Head of caudate nucleus (tissue), 42 donors: ENCODE measurements at regions of chr13 and their contacts with region 1.

Region 1: GRCh38 chr13:39655569-39656324 is at the start of gene COG6:
- DNase-seq: peak; percentile 84 to 98 (median 94)

Region 2: DNA sequence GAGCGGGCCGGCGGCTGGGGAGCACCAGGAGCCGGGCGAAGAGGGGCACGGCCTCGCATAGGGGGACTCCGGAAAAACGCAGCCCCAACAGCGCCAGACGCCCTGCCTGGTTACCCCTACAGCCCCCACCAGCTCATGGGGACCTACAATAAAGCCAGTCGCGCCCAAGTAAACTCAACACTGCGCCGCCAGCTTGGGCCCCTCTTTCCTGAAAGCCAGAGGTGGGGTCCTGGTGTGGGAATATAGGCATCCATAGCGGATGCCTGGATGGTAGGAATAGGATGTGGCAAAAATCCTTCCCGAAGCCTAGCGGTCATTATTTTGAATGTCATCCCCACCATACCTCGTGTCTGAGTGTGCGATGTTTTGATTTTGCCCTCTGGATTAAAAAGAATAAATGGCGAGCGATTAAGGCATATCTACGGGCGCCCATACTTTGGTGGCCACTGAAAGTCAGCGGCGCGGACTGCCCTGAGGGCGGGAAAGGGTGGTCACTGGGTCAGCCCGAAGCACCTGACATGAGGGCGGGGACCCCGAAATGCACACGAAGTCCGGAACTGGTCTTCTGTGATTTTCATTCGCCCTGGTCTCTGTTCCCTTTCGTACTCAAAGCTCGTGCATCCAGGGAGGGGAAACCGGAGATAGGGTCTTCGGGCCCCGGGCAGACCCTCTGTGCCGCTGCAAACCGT is 617.7 kb before region 1 on chr13 and contains the starts of genes NHLRC3 and PROSER1:
- intact Hi-C with region 1: loop called (anchors 5 kb)
- DNase-seq: peak; percentile 92 to 99 (median 96)